ENCODE measurements at regions of chr16 and their contacts with region 1.

Region 1: DNA sequence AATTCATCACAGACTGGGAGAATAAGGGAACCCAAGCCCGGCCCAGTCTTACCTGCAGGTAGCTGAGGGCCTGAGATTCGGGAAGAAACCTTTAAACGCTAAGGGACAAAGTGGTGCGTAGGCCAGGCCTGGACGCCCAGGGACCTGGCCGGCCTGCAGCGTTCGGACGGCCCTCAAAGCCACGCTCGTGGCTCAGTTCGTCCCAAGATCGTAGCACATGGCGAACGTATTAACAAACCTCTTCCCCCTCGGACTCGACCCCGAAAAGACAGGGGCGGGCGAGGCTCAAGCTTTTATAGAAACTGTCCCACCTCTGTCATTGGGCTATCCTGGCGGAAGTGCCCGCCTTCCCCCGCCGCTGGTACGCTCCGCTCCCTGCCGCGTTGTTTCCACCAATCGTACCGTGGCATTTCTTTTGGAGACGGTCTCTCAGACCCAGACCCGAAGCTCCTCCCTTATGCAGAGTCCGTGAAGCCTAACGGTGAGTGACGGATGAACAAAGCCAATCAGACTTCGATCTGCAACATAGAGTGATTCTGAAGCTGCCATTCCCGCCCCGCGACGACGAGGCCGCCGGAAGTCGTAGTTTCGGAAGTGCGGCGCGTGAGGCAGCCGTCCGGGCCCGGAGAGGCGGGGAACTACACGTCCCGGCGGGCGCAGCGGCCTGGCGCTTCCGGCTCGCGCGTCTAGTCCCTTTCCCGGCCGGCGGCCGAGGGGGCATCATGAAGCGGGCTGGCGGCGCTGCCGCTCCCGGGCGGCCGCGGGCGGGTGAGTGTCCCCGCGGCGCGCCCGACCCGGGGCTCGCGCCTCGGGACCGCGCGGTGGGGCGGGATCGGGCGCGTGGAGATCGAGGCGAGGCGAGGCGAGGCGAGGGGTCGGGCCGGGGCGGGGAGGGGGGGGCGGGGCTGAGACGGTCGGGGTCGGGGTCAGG is at the start of gene TRAF7:
- DNase-seq: peak; percentile 98
- ATAC-seq: peak; percentile 95
- H3K4me3 Mint-ChIP-seq: peak within 1 kb of the TSS; percentile 89
- H3K27ac Mint-ChIP-seq: peak within 1 kb of the TSS; percentile 94
- H3K4me1 Mint-ChIP-seq: peaks cover 31% of the 10 kb centered on the region
- H3K27me3 Mint-ChIP-seq: no peaks in the 10 kb centered on the region
- total RNA-seq, gene TRAF7: 70.7 to 93.7 TPM

Region 2: DNA sequence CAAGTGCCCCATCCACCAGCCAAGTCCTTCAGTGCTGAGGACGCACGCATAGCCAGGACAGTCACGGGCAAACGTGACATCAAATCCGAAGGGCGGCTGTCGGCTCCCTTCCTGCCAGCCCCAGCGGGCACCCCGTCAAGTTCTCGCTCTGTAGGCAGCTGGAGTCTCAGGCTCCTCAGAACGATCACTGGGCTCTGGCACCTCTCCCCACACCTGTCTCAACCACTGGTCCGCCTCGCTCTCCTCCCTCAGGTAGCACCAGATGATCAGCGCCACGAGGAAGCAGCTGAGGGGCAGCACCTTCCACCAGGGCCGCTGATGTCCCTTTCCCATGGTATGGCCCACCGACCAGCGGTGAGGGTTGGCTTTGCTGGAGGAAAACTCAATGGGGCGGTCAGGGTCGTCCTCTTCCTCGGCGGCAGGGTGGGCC is 735.2 kb before region 1 on chr16:
- CTCF ChIA-PET with region 1: no interaction called
- POLR2A ChIA-PET with region 1: no interaction called
- intact Hi-C with region 1: loop called in 1 of 2 experiments (anchors 1 kb)
- DNase-seq: peak; percentile 32
- ATAC-seq: no peak
- H3K4me3 Mint-ChIP-seq: peak overlapping the region; percentile 84
- H3K27ac Mint-ChIP-seq: peak overlapping the region; percentile 70
- H3K4me1 Mint-ChIP-seq: peaks cover 25% of the 10 kb centered on the region
- H3K27me3 Mint-ChIP-seq: no peaks in the 10 kb centered on the region

Region 3: DNA sequence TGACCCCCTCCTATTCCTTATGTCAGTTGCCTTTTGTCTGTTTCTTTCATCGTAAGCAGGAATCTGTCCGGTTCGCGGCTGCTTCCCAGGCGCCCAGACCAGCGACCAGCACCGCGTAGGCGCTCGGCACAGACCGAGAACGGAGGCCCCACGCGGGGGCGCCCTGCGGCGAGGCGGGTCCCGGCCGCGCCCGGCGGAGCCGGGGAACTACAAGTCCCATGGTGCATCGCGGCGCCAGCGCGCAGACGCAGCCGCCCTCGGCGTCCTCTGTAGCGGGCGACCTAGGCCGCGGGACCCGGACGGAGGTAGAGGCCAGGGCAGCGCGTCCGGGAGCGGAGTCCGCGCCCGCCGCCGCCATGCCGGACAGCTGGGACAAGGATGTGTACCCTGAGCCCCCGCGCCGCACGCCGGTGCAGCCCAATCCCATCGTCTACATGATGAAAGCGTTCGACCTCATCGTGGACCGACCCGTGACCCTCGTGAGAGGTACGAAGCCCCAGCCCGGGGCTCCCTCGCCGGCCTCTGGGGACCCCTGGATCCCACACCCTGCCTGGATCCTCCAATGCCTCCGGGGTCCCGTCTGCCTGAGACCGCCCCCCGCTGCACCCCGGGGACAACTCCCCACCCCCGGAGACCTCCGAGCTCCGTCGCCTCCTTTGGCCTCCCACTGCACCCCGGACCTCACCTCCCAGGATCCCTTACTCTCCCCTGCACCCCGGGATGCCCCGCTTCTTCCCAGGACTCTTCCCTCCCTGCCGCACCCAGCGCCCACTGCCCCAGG is 195.9 kb before region 1 on chr16 and contains the start of gene NDUFB10:
- CTCF ChIA-PET with region 1: no interaction called
- POLR2A ChIA-PET with region 1: interaction called, 12 read pairs
- intact Hi-C with region 1: loop called (anchors 1 to 2 kb)
- DNase-seq: peak; percentile 96
- ATAC-seq: peak; percentile 77
- H3K4me3 Mint-ChIP-seq: peak within 1 kb of the TSS; percentile 96
- H3K27ac Mint-ChIP-seq: peak within 1 kb of the TSS; percentile 95
- H3K4me1 Mint-ChIP-seq: peaks cover 34% of the 10 kb centered on the region
- H3K27me3 Mint-ChIP-seq: no peaks in the 10 kb centered on the region
- total RNA-seq, gene NDUFB10: 113 to 118 TPM

Region 4: GRCh38 chr16:2009789-2010510 is 145.4 kb before region 1 on chr16 and contains the start of gene ZNF598:
- CTCF ChIA-PET with region 1: no interaction called
- POLR2A ChIA-PET with region 1: interaction called, 4 read pairs
- intact Hi-C with region 1: loop called in 1 of 2 experiments (anchors 1 kb)
- DNase-seq: peak; percentile 90
- ATAC-seq: peak; percentile 93
- H3K4me3 Mint-ChIP-seq: peak within 1 kb of the TSS; percentile 95
- H3K27ac Mint-ChIP-seq: peak within 1 kb of the TSS; percentile 90
- H3K4me1 Mint-ChIP-seq: peaks cover 35% of the 10 kb centered on the region
- H3K27me3 Mint-ChIP-seq: no peaks in the 10 kb centered on the region
- total RNA-seq, gene ZNF598: 64.6 to 69.8 TPM

Region 5: GRCh38 chr16:2213817-2214720 is 58.7 kb after region 1 on chr16:
- CTCF ChIA-PET with region 1: no interaction called
- POLR2A ChIA-PET with region 1: interaction called, 7 read pairs
- intact Hi-C with region 1: loop called (anchors 1 to 5 kb)
- DNase-seq: peak; percentile 40
- ATAC-seq: no peak
- H3K4me3 Mint-ChIP-seq: peak overlapping the region; percentile 79
- H3K27ac Mint-ChIP-seq: peak overlapping the region; percentile 45
- H3K4me1 Mint-ChIP-seq: peaks cover 18% of the 10 kb centered on the region
- H3K27me3 Mint-ChIP-seq: no peaks in the 10 kb centered on the region

Region 6: DNA sequence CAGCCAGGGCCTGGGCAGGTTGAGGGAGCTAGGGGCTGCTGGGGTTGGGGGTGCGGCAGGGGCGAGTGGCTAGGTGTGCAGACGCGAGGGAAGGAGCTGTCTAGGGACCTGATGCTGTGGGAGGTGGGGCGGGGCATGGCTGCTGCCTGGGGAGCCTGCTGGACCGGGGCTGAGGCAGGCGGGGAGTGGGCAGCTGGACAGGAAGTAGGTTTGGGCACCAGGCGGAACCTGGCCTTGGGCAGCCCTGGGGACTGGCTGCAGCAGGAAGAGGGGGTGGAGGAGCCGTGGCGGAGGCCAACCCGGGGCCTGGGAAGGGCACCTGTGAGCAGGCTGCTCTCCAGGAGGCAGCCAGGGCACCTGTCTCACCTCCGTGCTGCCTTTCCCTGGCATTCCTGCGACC is 75.0 kb after region 1 on chr16:
- CTCF ChIA-PET with region 1: no interaction called
- POLR2A ChIA-PET with region 1: no interaction called
- intact Hi-C with region 1: no loop called
- DNase-seq: no peak
- ATAC-seq: no peak
- H3K4me3 Mint-ChIP-seq: no peak overlapping the region
- H3K27ac Mint-ChIP-seq: no peak overlapping the region
- H3K4me1 Mint-ChIP-seq: peaks cover 8% of the 10 kb centered on the region
- H3K27me3 Mint-ChIP-seq: peaks cover under 1% of the 10 kb centered on the region

Region 7: DNA sequence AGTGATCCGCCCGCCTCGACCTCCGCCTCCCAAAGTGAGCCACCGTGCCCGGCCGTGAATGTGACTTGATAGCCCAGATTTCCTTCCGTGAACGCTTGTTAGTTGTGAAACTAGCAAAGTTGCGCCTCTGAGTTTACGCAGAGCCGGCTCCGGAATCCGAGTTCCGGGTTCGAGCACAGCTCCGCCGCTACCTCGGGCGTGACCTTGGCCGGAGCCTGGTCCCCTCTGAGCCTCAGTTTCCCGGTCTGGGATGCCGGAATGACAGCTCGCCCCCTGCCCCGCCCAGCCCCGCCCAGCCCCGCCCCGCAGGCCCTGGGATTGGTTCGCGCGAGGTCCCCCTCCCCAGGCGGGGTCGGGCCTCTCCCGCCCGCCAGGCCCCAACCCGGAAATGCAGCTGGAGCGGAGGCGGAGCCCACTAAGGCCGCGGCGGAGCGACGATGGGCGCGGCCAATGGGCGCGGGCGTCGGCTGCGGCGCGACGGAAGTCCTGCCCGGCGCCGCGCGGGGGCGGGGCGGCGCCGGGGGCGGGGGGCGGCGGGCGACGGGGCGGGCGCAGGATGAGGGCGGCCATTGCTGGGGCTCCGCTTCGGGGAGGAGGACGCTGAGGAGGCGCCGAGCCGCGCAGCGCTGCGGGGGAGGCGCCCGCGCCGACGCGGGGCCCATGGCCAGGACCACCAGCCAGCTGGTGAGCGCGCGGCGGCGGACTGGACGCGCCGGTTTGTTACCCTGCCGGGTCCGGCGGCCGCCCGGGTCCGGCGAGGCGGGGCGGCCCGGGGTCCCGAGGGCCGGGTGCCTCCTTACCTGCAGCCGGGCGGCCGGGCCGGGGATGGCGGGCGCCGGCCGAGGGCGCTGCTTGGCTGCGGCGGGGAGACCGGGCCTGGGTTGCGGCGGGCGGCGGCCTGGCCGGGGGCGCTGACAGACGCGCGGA is 382.4 kb after region 1 on chr16 and contains the start of gene PDPK1:
- CTCF ChIA-PET with region 1: no interaction called
- POLR2A ChIA-PET with region 1: no interaction called
- intact Hi-C with region 1: loop called in 1 of 2 experiments (anchors 1 kb)
- DNase-seq: peak; percentile 97
- ATAC-seq: peak; percentile 93
- H3K4me3 Mint-ChIP-seq: peak within 1 kb of the TSS; percentile 83
- H3K27ac Mint-ChIP-seq: peak within 1 kb of the TSS; percentile 90
- H3K4me1 Mint-ChIP-seq: peaks cover 38% of the 10 kb centered on the region
- H3K27me3 Mint-ChIP-seq: no peaks in the 10 kb centered on the region
- total RNA-seq, gene PDPK1: 30.4 to 34.5 TPM

Region 8: GRCh38 chr16:3173892-3174617 is 1018.7 kb after region 1 on chr16:
- CTCF ChIA-PET with region 1: no interaction called
- POLR2A ChIA-PET with region 1: no interaction called
- intact Hi-C with region 1: no loop called
- DNase-seq: peak; percentile 61
- ATAC-seq: peak; percentile 10
- H3K4me3 Mint-ChIP-seq: peak overlapping the region; percentile 47
- H3K27ac Mint-ChIP-seq: peak overlapping the region; percentile 26
- H3K4me1 Mint-ChIP-seq: peaks cover 37% of the 10 kb centered on the region
- H3K27me3 Mint-ChIP-seq: peaks cover 51% of the 10 kb centered on the region

Measured in activated CD4-positive, alpha-beta T cell treated with anti-CD3 and anti-CD28 coated beads for 36 hours (primary cell).